ENCODE measurements at regions of chr15 and their contacts with region 1.

Region 1: GRCh38 chr15:55846116-55846707 is 103.3 kb upstream of the PRTG start:
- DNase-seq: peak; percentile 35
- ATAC-seq: peak; percentile 82
- H3K4me3 ChIP-seq: no peak overlapping the region
- H3K27ac ChIP-seq: no peak overlapping the region
- H3K4me1 ChIP-seq: no peaks in the 10 kb centered on the region
- H3K27me3 ChIP-seq: no peaks in the 10 kb centered on the region
- CTCF ChIP-seq: peak; percentile 79 to 83 (median 81)
- EP300 ChIP-seq: no peak
- POLR2A ChIP-seq: no peak
- RAD21 ChIP-seq: peak; percentile 92

Region 2: GRCh38 chr15:55526559-55527036 is 319.6 kb before region 1 on chr15:
- CTCF ChIA-PET with region 1: interaction called, 3 read pairs
- POLR2A ChIA-PET with region 1: no interaction called
- RAD21 ChIA-PET with region 1: interaction called, 3 read pairs
- SMC1A ChIA-PET with region 1: interaction called, 4 read pairs
- in situ Hi-C with region 1: no loop called
- intact Hi-C with region 1: loop called (anchors 10 kb)
- DNase-seq: no peak
- ATAC-seq: peak; percentile 90
- H3K4me3 ChIP-seq: no peak overlapping the region
- H3K27ac ChIP-seq: no peak overlapping the region
- H3K4me1 ChIP-seq: no peaks in the 10 kb centered on the region
- H3K27me3 ChIP-seq: no peaks in the 10 kb centered on the region
- CTCF ChIP-seq: peak; percentile 50 to 61 (median 55)
- EP300 ChIP-seq: no peak
- POLR2A ChIP-seq: no peak
- RAD21 ChIP-seq: peak; percentile 50

Region 3: GRCh38 chr15:55789066-55789660 is 57.0 kb before region 1 on chr15:
- CTCF ChIA-PET with region 1: interaction called, 16 read pairs
- POLR2A ChIA-PET with region 1: no interaction called
- RAD21 ChIA-PET with region 1: interaction called, 3 read pairs
- SMC1A ChIA-PET with region 1: no interaction called
- in situ Hi-C with region 1: no loop called
- intact Hi-C with region 1: loop called (anchors 5 kb)
- DNase-seq: no peak
- ATAC-seq: peak; percentile 66
- H3K4me3 ChIP-seq: no peak overlapping the region
- H3K27ac ChIP-seq: no peak overlapping the region
- H3K4me1 ChIP-seq: no peaks in the 10 kb centered on the region
- H3K27me3 ChIP-seq: no peaks in the 10 kb centered on the region
- CTCF ChIP-seq: peak; percentile 51 to 68 (median 66)
- EP300 ChIP-seq: no peak
- POLR2A ChIP-seq: no peak
- RAD21 ChIP-seq: peak; percentile 46; the same call in 1 of the 2 replicates